ENCODE measurements at regions of chr16 and their contacts with region 1.

Region 1: DNA sequence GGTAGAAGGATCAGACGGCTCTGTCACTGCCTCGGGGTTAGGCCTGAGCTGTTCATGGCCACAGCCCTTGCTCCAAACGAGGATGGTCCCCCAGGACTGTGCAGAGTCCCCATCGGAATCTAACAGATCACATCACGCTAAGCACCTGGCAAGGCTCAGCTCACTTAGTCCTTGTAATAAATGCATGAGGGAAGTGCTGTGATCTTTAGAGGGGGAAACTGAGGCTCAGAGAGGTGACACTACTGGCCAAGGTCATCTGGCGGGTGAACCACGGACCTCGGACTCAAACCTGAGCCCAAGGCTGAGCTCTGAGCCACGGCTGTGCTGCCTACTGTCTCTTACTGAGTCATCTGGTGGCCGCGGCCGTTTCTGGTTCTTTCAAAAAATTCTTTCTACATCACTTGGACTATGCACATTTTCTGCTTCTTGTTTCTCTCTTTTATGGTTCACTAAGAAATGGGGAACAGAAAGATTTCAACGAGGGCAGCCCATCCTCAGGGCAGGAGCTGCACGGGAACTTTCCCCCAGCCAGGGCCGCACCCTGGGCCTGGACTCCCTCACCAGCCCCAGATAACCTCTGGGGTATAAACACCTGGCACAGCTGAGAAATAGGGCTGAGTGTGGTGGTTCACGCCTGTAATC is 55.6 kb downstream of the COTL1 start:
- DNase-seq: peak; percentile 71 to 90 (median 83)
- H3K4me3 ChIP-seq: peak overlapping the region in 1 of 3 experiments; percentile 23
- H3K4me3 Mint-ChIP-seq: no peak overlapping the region
- H3K27ac ChIP-seq: peak overlapping the region; percentile 77 to 80
- H3K27ac Mint-ChIP-seq: peak overlapping the region; percentile 81 to 95 (median 85)
- H3K4me1 ChIP-seq: peaks cover 47 to 51% of the 10 kb centered on the region in 2 donors
- H3K4me1 Mint-ChIP-seq: peaks cover 43% of the 10 kb centered on the region
- H3K27me3 ChIP-seq: no peaks in the 10 kb centered on the region
- H3K27me3 Mint-ChIP-seq: peaks cover 0 to 4% (median 1%) of the 10 kb centered on the region in 3 donors
- CTCF ChIP-seq: no peak

Region 2: GRCh38 chr16:84520725-84521496 is 41.4 kb before region 1 on chr16:
- intact Hi-C with region 1: loop called in 1 of 2 experiments (anchors 5 kb)
- DNase-seq: no peak
- H3K4me3 ChIP-seq: no peak overlapping the region
- H3K4me3 Mint-ChIP-seq: no peak overlapping the region
- H3K27ac ChIP-seq: no peak overlapping the region
- H3K27ac Mint-ChIP-seq: no peak overlapping the region
- H3K4me1 ChIP-seq: peaks cover 0 to under 1% of the 10 kb centered on the region in 2 donors
- H3K4me1 Mint-ChIP-seq: no peaks in the 10 kb centered on the region
- H3K27me3 ChIP-seq: no peaks in the 10 kb centered on the region
- H3K27me3 Mint-ChIP-seq: peaks cover 7 to 14% (median 10%) of the 10 kb centered on the region in 3 donors
- CTCF ChIP-seq: no peak

Region 3: DNA sequence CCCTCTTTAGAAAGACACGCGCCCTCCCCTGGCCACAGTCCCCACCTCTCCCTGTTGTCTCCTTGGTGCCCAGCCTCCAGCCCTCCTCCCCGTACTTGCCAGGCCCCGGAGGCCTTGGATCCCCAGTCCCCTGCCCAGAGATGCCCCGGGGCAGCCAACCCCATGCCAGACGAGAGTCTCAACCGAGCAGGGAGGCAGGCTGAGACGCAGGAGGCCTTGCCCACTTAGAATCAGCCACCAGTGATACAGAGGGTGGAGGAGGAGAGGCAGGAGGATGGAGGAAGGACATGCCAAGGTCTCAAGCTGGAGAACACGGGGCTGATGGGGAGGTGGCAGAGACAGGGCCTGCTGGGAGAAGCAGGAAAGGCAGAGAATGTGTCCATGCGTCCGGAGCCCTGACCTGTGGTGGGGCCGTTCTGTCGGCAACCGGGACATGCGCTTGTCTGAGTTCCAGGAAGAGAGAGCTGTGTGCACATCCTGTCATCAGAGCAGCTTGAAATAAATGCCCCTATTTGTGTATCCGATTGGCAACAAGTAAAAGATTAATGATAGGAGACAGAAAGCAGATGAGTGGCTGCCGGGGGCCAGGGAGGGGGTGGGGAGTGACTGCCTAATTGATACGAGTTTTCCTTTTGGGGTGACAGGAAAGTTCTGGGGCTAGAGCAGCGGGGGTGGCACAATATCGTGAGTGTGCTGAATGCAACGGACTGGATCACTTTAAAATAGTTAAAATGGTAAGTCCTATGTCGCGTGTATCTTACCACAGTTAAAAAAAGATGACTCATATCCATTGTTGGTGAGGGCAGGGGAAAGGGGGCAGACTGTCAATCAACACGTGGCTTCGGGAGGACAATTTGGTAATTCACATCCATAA is 13.1 kb before region 1 on chr16:
- intact Hi-C with region 1: no loop called
- DNase-seq: peak in 1 of 3 donors; percentile 36
- H3K4me3 ChIP-seq: no peak overlapping the region
- H3K4me3 Mint-ChIP-seq: peak overlapping the region in 1 of 2 donors; percentile 64
- H3K27ac ChIP-seq: no peak overlapping the region
- H3K27ac Mint-ChIP-seq: peak overlapping the region in 2 of 7 donors; percentile 5 to 6
- H3K4me1 ChIP-seq: peaks cover 10 to 21% of the 10 kb centered on the region in 2 donors
- H3K4me1 Mint-ChIP-seq: peaks cover 38% of the 10 kb centered on the region
- H3K27me3 ChIP-seq: peaks cover 0 to 15% of the 10 kb centered on the region in 2 donors
- H3K27me3 Mint-ChIP-seq: peaks cover 17 to 30% (median 17%) of the 10 kb centered on the region in 3 donors
- CTCF ChIP-seq: no peak

Region 4: GRCh38 chr16:84593825-84594724 is 31.8 kb after region 1 on chr16:
- intact Hi-C with region 1: no loop called
- DNase-seq: peak; percentile 65 to 81 (median 77)
- H3K4me3 ChIP-seq: peak overlapping the region in 1 of 3 experiments; percentile 21
- H3K4me3 Mint-ChIP-seq: peak overlapping the region in 1 of 2 donors; percentile 50
- H3K27ac ChIP-seq: peak overlapping the region; percentile 55 to 99
- H3K27ac Mint-ChIP-seq: peak overlapping the region; percentile 88 to 100 (median 92)
- H3K4me1 ChIP-seq: peaks cover 53 to 55% of the 10 kb centered on the region in 2 donors
- H3K4me1 Mint-ChIP-seq: peaks cover 53% of the 10 kb centered on the region
- H3K27me3 ChIP-seq: no peaks in the 10 kb centered on the region
- H3K27me3 Mint-ChIP-seq: peaks cover 0 to 7% (median 0%) of the 10 kb centered on the region in 3 donors
- CTCF ChIP-seq: no peak

Region 5: GRCh38 chr16:84607694-84608093 is 45.4 kb after region 1 on chr16:
- intact Hi-C with region 1: no loop called
- DNase-seq: peak; percentile 87 to 91 (median 89)
- H3K4me3 ChIP-seq: peak overlapping the region in 1 of 3 experiments; percentile 59
- H3K4me3 Mint-ChIP-seq: peak overlapping the region; percentile 52 to 91
- H3K27ac ChIP-seq: peak overlapping the region; percentile 99
- H3K27ac Mint-ChIP-seq: peak overlapping the region; percentile 95 to 100 (median 98)
- H3K4me1 ChIP-seq: peaks cover 97 to 98% of the 10 kb centered on the region in 2 donors
- H3K4me1 Mint-ChIP-seq: peaks cover 94% of the 10 kb centered on the region
- H3K27me3 ChIP-seq: no peaks in the 10 kb centered on the region
- H3K27me3 Mint-ChIP-seq: peaks cover 0 to 2% (median 0%) of the 10 kb centered on the region in 3 donors
- CTCF ChIP-seq: no peak

Region 6: GRCh38 chr16:84633622-84634021 is 71.3 kb after region 1 on chr16:
- intact Hi-C with region 1: no loop called
- DNase-seq: no peak
- H3K4me3 ChIP-seq: no peak overlapping the region
- H3K4me3 Mint-ChIP-seq: no peak overlapping the region
- H3K27ac ChIP-seq: no peak overlapping the region
- H3K27ac Mint-ChIP-seq: no peak overlapping the region
- H3K4me1 ChIP-seq: peaks cover 26 to 27% of the 10 kb centered on the region in 2 donors
- H3K4me1 Mint-ChIP-seq: peaks cover 39% of the 10 kb centered on the region
- H3K27me3 ChIP-seq: no peaks in the 10 kb centered on the region
- H3K27me3 Mint-ChIP-seq: peaks cover 2 to 4% (median 4%) of the 10 kb centered on the region in 3 donors
- CTCF ChIP-seq: no peak

Measured in CD14-positive monocyte (primary cell).